ENCODE measurements at regions of chr17 and their contacts with region 1.

Region 1: DNA sequence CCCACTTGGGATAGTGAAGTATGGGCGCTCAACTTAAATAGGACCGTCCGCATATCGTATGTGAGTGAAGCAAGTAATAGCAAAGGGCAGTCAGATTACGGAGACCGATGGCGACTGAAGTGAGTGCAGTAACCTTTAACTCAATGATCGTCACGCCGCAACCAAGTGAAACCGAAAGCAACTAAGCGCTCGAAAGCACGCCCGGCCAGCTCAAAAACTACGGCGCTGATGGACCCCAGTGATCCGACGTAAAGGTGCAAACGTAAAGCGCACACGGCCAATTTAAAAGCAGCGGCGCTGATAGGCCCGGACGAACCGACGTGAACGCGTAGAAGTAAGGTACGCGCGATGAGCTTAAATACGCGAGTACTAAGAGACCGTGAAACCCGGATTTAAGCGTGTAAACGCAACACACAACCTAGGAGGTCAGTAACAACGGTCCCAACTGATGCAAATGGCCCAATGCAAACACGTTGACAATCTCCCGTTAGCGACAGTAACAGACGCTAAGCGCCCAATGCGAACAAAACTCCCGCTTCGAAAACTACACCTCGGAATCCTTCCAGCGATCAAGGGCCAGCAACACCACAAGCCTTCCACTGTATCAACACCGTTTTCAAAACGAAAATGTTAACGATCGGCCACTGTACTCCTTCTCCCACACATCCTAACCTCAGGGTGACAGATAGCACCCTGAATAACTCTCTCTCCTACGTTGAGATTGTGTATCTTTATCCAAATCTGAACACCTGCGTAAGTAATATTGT is 37.9 kb upstream of the ARL4D start:
- DNase-seq: peak; percentile 100
- H3K4me3 ChIP-seq: peak overlapping the region in 6 of 7 experiments; percentile 54 to 87 (median 78)
- H3K27ac ChIP-seq: peak overlapping the region; percentile 98 to 99
- H3K4me1 ChIP-seq: peaks cover 0 to 24% (median 16%) of the 10 kb centered on the region in 4 experiments
- H3K27me3 ChIP-seq: no peaks in the 10 kb centered on the region

Region 2: GRCh38 chr17:43309505-43310332 is 51.2 kb before region 1 on chr17:
- CTCF ChIA-PET with region 1: interaction called, 4 read pairs
- POLR2A ChIA-PET with region 1: interaction called, 44 read pairs
- DNase-seq: peak in 2 of 3 donors; percentile 33 to 35
- H3K4me3 ChIP-seq: no peak overlapping the region
- H3K27ac ChIP-seq: no peak overlapping the region
- H3K4me1 ChIP-seq: no peaks in the 10 kb centered on the region
- H3K27me3 ChIP-seq: no peaks in the 10 kb centered on the region

Region 3: GRCh38 chr17:43316522-43317142 is 44.3 kb before region 1 on chr17:
- CTCF ChIA-PET with region 1: no interaction called
- POLR2A ChIA-PET with region 1: interaction called, 44 read pairs
- DNase-seq: peak; percentile 39 to 84 (median 74)
- H3K4me3 ChIP-seq: no peak overlapping the region
- H3K27ac ChIP-seq: no peak overlapping the region
- H3K4me1 ChIP-seq: peaks cover 0 to 6% (median 1%) of the 10 kb centered on the region in 4 experiments
- H3K27me3 ChIP-seq: no peaks in the 10 kb centered on the region

Region 4: GRCh38 chr17:43338886-43339516 is 21.9 kb before region 1 on chr17:
- CTCF ChIA-PET with region 1: interaction called, 17 read pairs
- POLR2A ChIA-PET with region 1: interaction called, 17 read pairs
- DNase-seq: peak; percentile 61 to 68 (median 65)
- H3K4me3 ChIP-seq: no peak overlapping the region
- H3K27ac ChIP-seq: no peak overlapping the region
- H3K4me1 ChIP-seq: peaks cover 0 to 11% (median 6%) of the 10 kb centered on the region in 4 experiments
- H3K27me3 ChIP-seq: no peaks in the 10 kb centered on the region

Region 5: DNA sequence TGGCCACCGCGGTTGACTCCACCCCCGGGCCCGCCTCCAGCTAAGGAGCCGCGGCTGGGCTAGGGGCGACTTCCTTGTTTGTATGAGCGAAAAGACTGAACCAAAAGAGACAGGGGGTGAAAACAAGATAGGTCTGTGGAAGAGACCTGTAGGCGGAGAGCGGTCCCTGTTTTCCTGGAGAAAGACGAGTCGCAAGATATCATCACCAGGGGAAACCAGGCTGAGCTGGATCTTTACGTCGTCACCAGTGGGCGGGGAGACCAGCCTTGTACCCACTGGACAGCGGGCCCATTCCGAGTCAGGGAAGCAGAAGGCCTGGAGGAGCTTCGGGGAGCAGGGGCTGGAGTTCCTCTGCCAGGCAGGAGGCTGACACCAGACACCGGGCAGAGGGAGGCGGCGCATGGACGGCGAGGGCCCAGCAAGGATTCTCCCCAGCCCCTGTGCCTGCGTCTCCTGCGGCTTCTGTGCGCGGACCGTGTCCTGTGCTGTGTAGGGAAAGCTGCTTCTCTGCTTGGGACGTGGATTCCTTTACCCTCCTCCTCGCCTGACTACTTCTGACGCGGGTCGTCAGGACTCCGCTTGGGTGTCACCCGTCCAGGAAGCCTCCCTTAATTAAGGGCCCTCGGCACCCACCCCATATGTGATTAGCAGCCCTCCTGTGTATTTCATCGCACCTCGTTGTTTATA is 27.6 kb after region 1 on chr17:
- CTCF ChIA-PET with region 1: interaction called, 5 read pairs
- POLR2A ChIA-PET with region 1: interaction called, 28 read pairs
- DNase-seq: peak; percentile 90 to 96 (median 95)
- H3K4me3 ChIP-seq: peak overlapping the region; percentile 57 to 98 (median 88)
- H3K27ac ChIP-seq: peak overlapping the region; percentile 84 to 92
- H3K4me1 ChIP-seq: peaks cover 3 to 22% (median 18%) of the 10 kb centered on the region in 4 experiments
- H3K27me3 ChIP-seq: no peaks in the 10 kb centered on the region

Region 6: GRCh38 chr17:43467981-43468581 is 107.2 kb after region 1 on chr17:
- CTCF ChIA-PET with region 1: no interaction called
- POLR2A ChIA-PET with region 1: no interaction called
- DNase-seq: no peak
- H3K4me3 ChIP-seq: no peak overlapping the region
- H3K27ac ChIP-seq: no peak overlapping the region
- H3K4me1 ChIP-seq: no peaks in the 10 kb centered on the region
- H3K27me3 ChIP-seq: peaks cover 0 to 5% (median 0%) of the 10 kb centered on the region in 5 experiments

Region 7: DNA sequence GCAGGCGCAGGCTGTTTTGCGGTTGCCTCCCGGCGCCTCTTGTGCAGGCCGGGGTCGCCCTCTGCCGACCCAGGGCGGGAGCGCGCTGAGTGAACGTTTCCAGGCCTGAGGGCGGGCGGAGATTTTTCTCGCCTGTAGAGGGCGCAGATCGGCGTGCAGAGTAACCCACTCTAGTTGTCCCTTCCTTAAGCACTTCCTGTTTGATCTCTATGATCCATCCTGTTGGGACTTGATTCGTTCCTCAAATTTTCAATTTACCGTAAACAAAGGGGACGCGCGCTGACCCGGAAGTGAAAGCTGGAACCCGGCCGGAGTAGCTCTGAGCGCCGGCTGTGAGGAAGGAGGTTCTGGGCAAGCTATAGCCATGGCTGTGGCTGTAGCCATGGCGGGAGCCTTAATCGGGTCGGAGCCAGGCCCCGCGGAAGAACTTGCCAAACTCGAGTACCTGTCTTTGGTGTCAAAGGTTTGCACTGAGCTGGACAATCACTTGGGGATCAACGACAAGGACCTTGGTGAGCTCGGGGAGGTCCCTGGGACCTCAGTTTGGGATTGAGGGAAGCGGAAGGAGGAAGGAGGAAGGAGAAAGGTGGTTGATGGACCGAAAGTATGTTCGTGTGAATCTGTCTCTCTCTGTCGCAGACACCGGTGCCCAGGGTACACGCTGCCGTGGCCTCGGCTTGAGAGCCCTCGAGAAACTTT is 122.9 kb after region 1 on chr17 and contains the start of gene DHX8:
- CTCF ChIA-PET with region 1: interaction called, 3 read pairs
- POLR2A ChIA-PET with region 1: interaction called, 19 read pairs
- DNase-seq: peak; percentile 97 to 99 (median 99)
- H3K4me3 ChIP-seq: peak within 1 kb of the TSS; percentile 85 to 97 (median 96)
- H3K27ac ChIP-seq: peak within 1 kb of the TSS; percentile 90
- H3K4me1 ChIP-seq: peaks cover 8 to 24% (median 11%) of the 10 kb centered on the region in 4 experiments
- H3K27me3 ChIP-seq: no peaks in the 10 kb centered on the region

Measured in common myeloid progenitor, CD34-positive (primary cell).